PC-9 (cell line): ENCODE measurements at regions of chr22 and their contacts with region 1.

Region 1: GRCh38 chr22:46062971-46063631 is 86.1 kb upstream of the WNT7B start:
- DNase-seq: no peak
- H3K4me3 ChIP-seq: no peak overlapping the region
- H3K27ac ChIP-seq: no peak overlapping the region
- H3K4me1 ChIP-seq: peaks cover 11% of the 10 kb centered on the region
- H3K27me3 ChIP-seq: no peaks in the 10 kb centered on the region
- CTCF ChIP-seq: no peak

Region 2: DNA sequence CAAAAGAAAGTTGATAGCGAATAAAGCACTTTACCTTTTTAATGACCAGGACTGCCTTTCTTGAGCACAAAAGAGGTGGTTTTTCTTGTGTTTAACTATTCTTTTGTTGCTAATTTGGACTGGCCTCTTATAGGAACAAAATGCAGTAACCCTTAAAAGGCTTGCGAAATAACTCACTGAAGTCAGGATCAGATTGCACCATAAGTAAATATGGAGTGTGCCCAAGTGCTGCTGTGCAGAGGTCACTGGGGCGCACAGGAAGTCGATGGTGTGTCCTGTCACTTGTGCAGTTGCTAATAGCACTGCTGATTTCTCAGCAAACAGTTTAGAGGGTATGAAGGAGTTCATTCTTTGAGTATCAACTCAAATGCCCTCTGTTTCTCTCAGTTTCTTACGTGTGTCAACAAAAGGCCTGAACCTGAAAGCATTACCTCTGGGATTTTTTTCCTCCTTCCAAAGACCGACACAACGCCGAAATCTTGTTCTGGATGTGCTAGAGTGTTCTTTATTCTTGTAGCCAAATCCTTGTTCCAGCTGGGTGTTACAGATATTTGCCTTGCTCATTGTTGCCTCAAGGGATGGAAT is 320.1 kb before region 1 on chr22:
- CTCF ChIA-PET with region 1: no interaction called
- POLR2A ChIA-PET with region 1: no interaction called
- intact Hi-C with region 1: no loop called
- DNase-seq: peak; percentile 56 to 93
- H3K4me3 ChIP-seq: peak overlapping the region; percentile 8; the same call in 1 of the 2 replicates
- H3K27ac ChIP-seq: peak overlapping the region; percentile 93
- H3K4me1 ChIP-seq: peaks cover 66% of the 10 kb centered on the region
- H3K27me3 ChIP-seq: no peaks in the 10 kb centered on the region
- CTCF ChIP-seq: no peak

Region 3: DNA sequence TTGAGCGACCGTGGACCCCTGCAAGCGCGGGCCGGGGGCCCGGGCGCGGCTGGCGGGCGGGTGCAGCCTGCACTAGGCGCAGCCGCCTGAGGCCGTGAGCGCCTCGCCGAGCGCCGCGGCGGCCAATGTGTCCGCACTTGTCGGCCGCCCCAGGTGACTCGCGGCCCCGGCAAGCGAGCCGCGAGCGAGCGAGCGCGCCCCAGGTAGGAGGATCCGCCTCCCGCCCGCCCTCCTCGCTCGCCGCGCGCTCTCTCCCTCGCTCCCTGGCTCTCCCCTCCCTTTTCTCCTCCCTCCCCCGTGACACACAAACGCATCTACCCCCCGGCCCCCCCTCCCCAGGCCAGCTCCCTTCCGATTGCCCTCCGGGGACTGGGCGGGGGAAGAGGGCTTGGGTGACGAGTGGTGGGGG is 86.1 kb before region 1 on chr22 and contains the start of gene WNT7B:
- CTCF ChIA-PET with region 1: no interaction called
- POLR2A ChIA-PET with region 1: interaction called, 15 read pairs
- intact Hi-C with region 1: no loop called
- DNase-seq: peak; percentile 79 to 86
- H3K4me3 ChIP-seq: peak within 1 kb of the TSS; percentile 99
- H3K27ac ChIP-seq: no peak within 1 kb of the TSS
- H3K4me1 ChIP-seq: peaks cover 36% of the 10 kb centered on the region
- H3K27me3 ChIP-seq: no peaks in the 10 kb centered on the region
- CTCF ChIP-seq: no peak
- total RNA-seq, gene WNT7B: 66.9 and 75.5 TPM in 2 replicates

Region 4: DNA sequence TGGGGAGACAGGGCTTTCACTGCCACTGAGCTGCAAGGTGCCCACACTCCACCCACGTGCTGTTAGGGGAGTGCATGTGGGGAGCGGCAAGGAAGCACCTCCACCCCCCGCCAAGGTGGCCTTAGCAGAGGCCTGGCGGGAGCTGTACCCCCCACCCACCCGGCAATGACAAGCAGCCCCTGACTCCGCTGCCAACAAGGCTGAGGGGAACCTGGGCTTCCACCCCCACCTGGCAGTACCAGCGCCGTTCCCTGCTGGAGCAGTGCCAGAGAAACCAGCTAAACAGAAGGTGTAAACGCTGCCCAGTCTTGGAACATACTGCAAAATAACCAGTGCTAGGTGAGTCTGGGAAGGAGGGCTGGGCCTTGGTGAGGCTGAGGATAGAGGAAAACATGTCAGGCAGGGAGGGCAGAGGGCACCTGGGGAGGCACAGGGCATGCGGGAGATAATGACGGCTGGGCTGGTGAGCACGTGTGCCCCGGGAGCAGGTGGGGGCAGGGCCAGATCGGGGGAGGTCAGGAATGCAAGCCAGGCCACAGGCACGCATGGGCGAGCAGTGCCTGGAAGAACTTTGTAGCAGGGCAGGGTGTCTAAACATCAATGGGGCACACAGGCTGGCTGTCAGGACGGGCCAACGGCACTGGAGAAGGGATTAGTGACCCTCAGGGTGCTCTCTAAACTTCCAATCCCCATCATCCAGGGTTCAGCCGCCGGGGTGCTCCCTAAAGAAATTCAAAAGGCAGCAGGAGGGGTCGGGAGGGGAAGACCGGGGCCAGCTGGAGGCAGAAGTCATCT is 668.3 kb after region 1 on chr22:
- CTCF ChIA-PET with region 1: no interaction called
- POLR2A ChIA-PET with region 1: no interaction called
- intact Hi-C with region 1: no loop called
- DNase-seq: no peak
- H3K4me3 ChIP-seq: no peak overlapping the region
- H3K27ac ChIP-seq: no peak overlapping the region
- H3K4me1 ChIP-seq: no peaks in the 10 kb centered on the region
- H3K27me3 ChIP-seq: no peaks in the 10 kb centered on the region
- CTCF ChIP-seq: no peak